H1 (cell line): ENCODE measurements at regions of chr11 and their contacts with region 1.

Region 1: GRCh38 chr11:12235947-12236743 is 125.8 kb downstream of the MICAL2 start:
- DNase-seq: no peak
- H3K4me3 ChIP-seq: no peak overlapping the region
- H3K27ac ChIP-seq: no peak overlapping the region
- H3K4me1 ChIP-seq: no peaks in the 10 kb centered on the region; a peak in 1 of 7 replicates
- H3K27me3 ChIP-seq: no peaks in the 10 kb centered on the region
- CTCF ChIP-seq: peak in 2 of 3 experiments; percentile 56 to 67; a peak in 2 of 4 replicates
- EP300 ChIP-seq: no peak
- POLR2A ChIP-seq: no peak
- RAD21 ChIP-seq: peak; percentile 62 to 73

Region 2: GRCh38 chr11:12087075-12088004 is 148.8 kb before region 1 on chr11:
- CTCF ChIA-PET with region 1: interaction called, 19 read pairs
- POLR2A ChIA-PET with region 1: no interaction called
- DNase-seq: no peak
- H3K4me3 ChIP-seq: no peak overlapping the region
- H3K27ac ChIP-seq: no peak overlapping the region
- H3K4me1 ChIP-seq: peaks cover under 1 to 6% (median 6%) of the 10 kb centered on the region in 4 experiments
- H3K27me3 ChIP-seq: no peaks in the 10 kb centered on the region
- CTCF ChIP-seq: peak in 1 of 3 experiments; percentile 7; a peak in 1 of 4 replicates
- EP300 ChIP-seq: no peak
- POLR2A ChIP-seq: no peak
- RAD21 ChIP-seq: no peak

Region 3: DNA sequence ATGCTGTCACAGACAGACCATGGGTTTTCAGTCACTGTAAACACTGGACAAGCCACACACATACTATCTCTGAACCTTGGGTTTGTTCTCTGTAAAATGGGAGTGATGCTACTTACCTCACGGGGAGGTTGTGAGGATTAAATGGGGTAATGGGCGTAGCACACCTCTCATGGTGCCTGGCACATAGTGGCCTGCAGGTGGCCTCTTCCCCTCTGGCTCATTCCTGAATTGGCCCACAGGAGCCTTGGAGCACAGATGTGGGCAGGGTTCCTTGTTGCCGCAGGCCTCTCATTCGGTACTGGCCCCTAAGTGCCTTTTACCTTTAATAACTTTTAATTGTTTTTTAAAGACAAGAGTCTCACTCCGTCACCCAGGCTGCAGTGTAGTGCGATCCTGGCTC is 114.1 kb before region 1 on chr11:
- CTCF ChIA-PET with region 1: interaction called, 137 read pairs
- POLR2A ChIA-PET with region 1: no interaction called
- DNase-seq: peak in 1 of 2 experiments; percentile 58
- H3K4me3 ChIP-seq: no peak overlapping the region
- H3K27ac ChIP-seq: no peak overlapping the region
- H3K4me1 ChIP-seq: no peaks in the 10 kb centered on the region
- H3K27me3 ChIP-seq: 0 out of 7 replicates have a peak, but pooled peaks cover 0 to 3% (median 0%) of the 10 kb centered on the region in 4 experiments
- CTCF ChIP-seq: peak; percentile 81 to 93 (median 87)
- EP300 ChIP-seq: no peak
- POLR2A ChIP-seq: no peak
- RAD21 ChIP-seq: peak; percentile 72 to 80

Region 4: DNA sequence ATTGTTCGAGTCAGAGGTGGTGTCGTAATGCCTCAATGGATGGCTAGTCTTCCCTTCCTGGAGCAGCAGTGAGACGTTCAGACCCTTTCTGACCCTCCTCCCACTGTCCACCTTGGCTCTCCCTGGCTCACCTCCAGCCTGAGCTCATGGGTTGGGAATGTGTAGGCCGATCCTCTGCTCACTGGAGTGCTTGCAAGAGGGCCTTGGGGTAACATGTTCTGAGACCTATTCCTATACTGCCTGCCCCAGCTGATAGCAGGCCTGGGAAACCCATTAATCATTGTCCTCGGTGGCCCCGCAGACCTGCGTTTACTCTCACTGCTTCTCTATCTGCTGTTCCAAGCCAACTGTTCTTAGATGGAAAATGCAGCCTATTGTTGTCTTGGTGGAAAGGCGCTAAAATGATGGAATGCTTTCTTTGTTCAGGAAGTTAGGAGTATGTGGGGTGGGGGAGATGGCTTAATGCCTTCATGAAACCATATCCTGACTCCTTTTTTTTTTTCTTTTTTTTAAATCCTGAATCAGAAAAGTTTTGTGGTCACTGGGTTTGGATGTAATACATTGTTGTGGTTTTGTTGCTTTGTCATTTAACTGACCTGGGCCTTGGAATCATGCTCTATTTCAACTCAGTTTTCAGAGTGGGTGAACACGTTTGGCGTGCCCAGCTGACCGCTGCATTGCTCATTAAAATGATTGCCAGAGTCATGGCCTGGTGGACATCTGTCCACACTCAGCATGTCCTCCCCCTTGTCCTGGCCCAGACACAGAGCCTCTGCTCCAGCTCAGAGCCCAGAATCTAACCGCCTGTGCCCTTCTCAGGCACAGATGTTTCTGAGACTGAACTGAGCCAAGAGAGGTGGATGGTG is 53.2 kb before region 1 on chr11:
- CTCF ChIA-PET with region 1: interaction called, 14 read pairs
- POLR2A ChIA-PET with region 1: no interaction called
- DNase-seq: no peak
- H3K4me3 ChIP-seq: no peak overlapping the region
- H3K27ac ChIP-seq: no peak overlapping the region
- H3K4me1 ChIP-seq: peaks cover 0 to 4% (median 0%) of the 10 kb centered on the region in 4 experiments; a peak in 1 of 7 replicates
- H3K27me3 ChIP-seq: no peaks in the 10 kb centered on the region
- CTCF ChIP-seq: no peak
- EP300 ChIP-seq: no peak
- POLR2A ChIP-seq: no peak
- RAD21 ChIP-seq: no peak

Region 5: DNA sequence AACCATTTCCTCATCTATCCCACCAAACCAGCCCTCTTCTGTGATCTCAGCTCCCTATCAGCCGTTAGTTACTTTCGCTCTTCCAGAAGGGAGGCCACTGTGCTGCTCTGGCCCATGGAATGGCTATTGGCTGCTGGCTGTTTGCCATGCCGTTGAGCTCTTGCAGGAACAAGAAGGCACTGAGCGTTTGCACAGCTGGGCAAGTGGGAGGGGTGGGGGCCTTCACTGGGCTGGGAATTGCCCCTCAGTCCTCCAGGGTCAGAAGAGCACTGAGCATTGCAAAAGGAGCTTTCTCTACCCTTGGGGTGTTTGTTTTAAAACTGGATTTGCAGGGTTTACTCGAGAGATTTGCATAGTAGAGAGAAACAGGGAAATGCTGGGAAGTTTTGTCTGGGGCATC is 12.2 kb after region 1 on chr11:
- CTCF ChIA-PET with region 1: interaction called, 25 read pairs
- POLR2A ChIA-PET with region 1: interaction called, 3 read pairs
- DNase-seq: no peak
- H3K4me3 ChIP-seq: no peak overlapping the region
- H3K27ac ChIP-seq: no peak overlapping the region
- H3K4me1 ChIP-seq: peaks cover 5 to 19% (median 13%) of the 10 kb centered on the region in 4 experiments; a peak in 5 of 7 replicates
- H3K27me3 ChIP-seq: 0 out of 7 replicates have a peak, but pooled peaks cover 0 to 2% (median 0%) of the 10 kb centered on the region in 4 experiments
- CTCF ChIP-seq: no peak
- EP300 ChIP-seq: no peak
- POLR2A ChIP-seq: no peak
- RAD21 ChIP-seq: no peak

Region 6: GRCh38 chr11:12281571-12282478 is 45.7 kb after region 1 on chr11:
- CTCF ChIA-PET with region 1: interaction called, 53 read pairs
- POLR2A ChIA-PET with region 1: no interaction called
- DNase-seq: peak; percentile 57 to 94
- H3K4me3 ChIP-seq: no peak overlapping the region
- H3K27ac ChIP-seq: no peak overlapping the region
- H3K4me1 ChIP-seq: peaks cover 0 to 6% (median 0%) of the 10 kb centered on the region in 4 experiments; a peak in 1 of 7 replicates
- H3K27me3 ChIP-seq: no peaks in the 10 kb centered on the region
- CTCF ChIP-seq: peak; percentile 94 to 95 (median 94)
- EP300 ChIP-seq: no peak
- POLR2A ChIP-seq: no peak
- RAD21 ChIP-seq: peak; percentile 100

Region 7: GRCh38 chr11:12331239-12331874 is 95.2 kb after region 1 on chr11:
- CTCF ChIA-PET with region 1: no interaction called
- POLR2A ChIA-PET with region 1: no interaction called
- DNase-seq: peak; percentile 53 to 84
- H3K4me3 ChIP-seq: no peak overlapping the region
- H3K27ac ChIP-seq: no peak overlapping the region
- H3K4me1 ChIP-seq: peaks cover 0 to 11% (median 1%) of the 10 kb centered on the region in 4 experiments; a peak in 4 of 7 replicates
- H3K27me3 ChIP-seq: no peaks in the 10 kb centered on the region; a peak in 1 of 7 replicates
- CTCF ChIP-seq: peak; percentile 42 to 83 (median 80)
- EP300 ChIP-seq: no peak
- POLR2A ChIP-seq: no peak
- RAD21 ChIP-seq: peak; percentile 98